ENCODE measurements at regions of chr18 and their contacts with region 1.

Region 1: DNA sequence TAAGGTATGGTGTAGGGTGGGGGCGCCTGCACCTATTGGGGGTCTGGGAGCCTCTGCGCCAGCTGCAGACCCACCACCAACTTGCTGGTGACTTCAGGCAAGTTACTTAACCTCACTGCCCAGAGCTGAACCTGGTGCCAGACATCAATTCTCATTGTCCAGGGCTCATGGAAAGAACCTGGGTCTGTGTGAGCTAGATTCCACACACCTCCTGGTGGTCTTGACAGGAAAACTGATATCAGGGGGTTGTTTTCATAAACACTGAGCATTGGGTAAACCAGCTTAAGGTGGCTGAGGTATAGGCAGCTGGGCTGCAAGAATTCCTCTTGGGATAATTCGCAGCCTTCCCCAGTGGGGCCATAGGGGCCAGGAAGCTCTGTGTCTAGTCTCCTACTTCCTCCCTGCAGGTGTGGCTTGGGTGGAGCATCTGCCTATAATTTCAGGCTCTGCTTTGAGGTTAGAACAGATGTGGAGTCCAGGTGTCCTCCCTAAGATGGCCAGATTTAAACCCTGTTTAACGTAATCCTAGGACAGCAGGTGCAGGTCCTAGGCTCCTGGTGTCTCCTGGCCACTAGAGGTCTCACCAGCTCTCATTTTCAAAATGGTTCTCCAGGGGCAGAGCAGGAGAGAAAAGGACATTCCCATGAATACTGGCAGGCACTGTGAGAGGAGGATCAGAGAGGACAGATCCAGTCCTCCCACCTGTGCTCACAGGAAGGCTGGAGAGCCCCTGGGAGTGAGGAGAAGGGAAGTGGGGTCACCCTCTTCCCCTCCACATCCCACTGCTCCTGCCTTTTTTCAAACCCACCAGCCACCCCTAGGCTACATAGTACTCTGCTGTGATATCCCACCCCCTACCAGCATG is 100.4 kb upstream of the SMAD2 start:
- DNase-seq: no peak
- H3K4me3 ChIP-seq: no peak overlapping the region
- H3K27me3 ChIP-seq: peaks cover 2% of the 10 kb centered on the region; the same call in 1 of the 2 replicates
- CTCF ChIP-seq: peak; percentile 83

Region 2: DNA sequence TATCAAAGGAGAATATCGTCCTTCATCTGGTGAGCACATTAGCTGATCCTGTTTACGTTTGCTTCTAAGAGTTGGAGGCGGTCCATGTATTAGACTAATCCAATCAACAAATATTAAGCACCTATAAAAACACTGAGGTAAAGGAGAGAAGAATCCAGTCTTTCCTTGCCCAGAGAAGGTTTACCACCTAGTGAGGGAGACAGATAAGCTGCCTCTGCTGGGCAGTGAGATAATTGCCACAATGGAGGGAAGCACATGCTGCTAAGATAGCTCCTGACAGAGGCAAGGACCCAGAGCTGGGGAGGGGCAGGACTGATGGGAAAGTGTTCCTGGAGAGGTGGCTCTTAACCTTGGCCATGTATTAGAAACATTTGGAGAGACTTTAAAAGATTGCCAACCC is 1237.3 kb before region 1 on chr18:
- CTCF ChIA-PET with region 1: no interaction called
- POLR2A ChIA-PET with region 1: no interaction called
- DNase-seq: no peak
- H3K4me3 ChIP-seq: no peak overlapping the region
- H3K27me3 ChIP-seq: no peaks in the 10 kb centered on the region
- CTCF ChIP-seq: no peak; the same call in 1 of the 2 replicates

Region 3: GRCh38 chr18:48279312-48279711 is 248.5 kb after region 1 on chr18:
- CTCF ChIA-PET with region 1: no interaction called
- POLR2A ChIA-PET with region 1: no interaction called
- DNase-seq: no peak
- H3K4me3 ChIP-seq: no peak overlapping the region
- H3K27me3 ChIP-seq: no peaks in the 10 kb centered on the region
- CTCF ChIP-seq: no peak

Region 4: GRCh38 chr18:48330403-48331022 is 299.7 kb after region 1 on chr18:
- CTCF ChIA-PET with region 1: no interaction called
- POLR2A ChIA-PET with region 1: no interaction called
- DNase-seq: peak; percentile 43
- H3K4me3 ChIP-seq: no peak overlapping the region
- H3K27me3 ChIP-seq: peaks cover 9% of the 10 kb centered on the region
- CTCF ChIP-seq: no peak

Region 5: GRCh38 chr18:48345596-48345995 is 314.7 kb after region 1 on chr18:
- CTCF ChIA-PET with region 1: interaction called, 10 read pairs
- POLR2A ChIA-PET with region 1: no interaction called
- DNase-seq: no peak
- H3K4me3 ChIP-seq: no peak overlapping the region
- H3K27me3 ChIP-seq: peaks cover 11% of the 10 kb centered on the region
- CTCF ChIP-seq: peak; percentile 50